Activated CD8-positive, alpha-beta T cell treated with anti-CD3 and anti-CD28 coated beads for 36 hours (primary cell): ENCODE measurements at regions of chr9 and their contacts with region 1.

Region 1: DNA sequence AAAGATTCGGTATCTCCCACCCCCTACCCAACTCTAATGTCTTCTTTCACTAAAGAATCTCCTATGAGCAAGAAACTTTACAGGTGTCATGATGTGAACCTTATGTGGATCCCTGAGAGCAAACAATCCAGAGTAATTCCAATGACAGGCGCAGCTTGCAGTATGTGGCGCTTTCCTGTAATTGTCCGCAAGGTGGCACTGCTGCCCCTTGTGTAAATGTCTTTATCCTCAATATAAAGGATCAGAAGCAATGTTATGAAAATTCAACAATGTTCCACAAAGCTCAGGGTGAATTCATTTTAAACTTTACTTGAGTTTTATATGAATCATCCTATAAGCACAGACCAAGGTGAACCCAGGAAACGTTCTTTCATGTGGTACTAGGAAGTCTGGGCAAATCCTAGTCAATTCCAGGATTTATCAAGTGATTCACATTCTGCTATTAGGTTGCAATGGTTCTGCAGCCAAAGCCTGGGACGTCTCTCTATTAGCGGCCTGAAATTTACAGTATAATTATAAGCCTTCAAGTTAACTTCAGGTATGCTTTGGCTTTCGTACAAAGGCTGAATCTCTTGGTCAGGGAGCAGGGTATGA is 113.7 kb downstream of the TRPM6 start:
- DNase-seq: peak; percentile 86
- ATAC-seq: peak; percentile 77
- H3K4me3 Mint-ChIP-seq: no peak overlapping the region
- H3K27ac Mint-ChIP-seq: no peak overlapping the region
- H3K4me1 Mint-ChIP-seq: peaks cover 11% of the 10 kb centered on the region
- H3K27me3 Mint-ChIP-seq: peaks cover 20% of the 10 kb centered on the region
- CTCF ChIP-seq: peak; percentile 90

Region 2: DNA sequence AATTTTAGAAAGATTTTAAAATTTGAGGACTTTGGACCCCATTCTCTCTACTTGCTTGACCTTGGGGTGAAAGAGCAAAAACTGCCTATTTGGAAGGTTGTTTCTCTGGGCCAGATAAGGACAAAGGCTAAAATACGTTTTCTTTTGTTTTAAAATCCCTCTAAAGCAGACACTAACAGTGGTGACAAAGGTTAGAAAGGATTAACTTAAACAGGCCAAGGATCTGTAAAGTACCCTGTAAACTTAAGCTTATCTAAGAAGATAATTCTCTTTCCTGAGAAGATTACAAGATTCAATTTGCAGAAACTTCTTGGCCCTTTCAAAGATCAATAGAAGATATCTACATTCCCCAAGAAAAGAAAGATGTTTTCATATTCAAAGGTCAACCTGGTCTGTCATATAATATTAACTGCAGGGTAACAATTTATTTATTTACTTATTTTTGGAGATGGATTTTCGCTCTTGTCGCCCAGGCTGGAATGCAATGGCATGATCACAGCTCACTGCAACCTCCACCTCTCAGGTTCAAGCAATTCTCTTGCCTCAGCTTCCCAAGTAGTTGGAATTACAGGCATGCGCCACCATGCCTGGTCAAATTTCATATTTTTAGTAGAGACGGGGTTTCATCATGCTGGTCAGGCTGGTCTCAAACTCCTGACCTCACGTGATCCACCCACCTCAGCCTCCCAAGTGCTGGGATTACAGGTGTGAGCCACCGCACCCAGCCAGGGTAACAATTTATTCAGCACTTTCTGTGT is 101.9 kb after region 1 on chr9:
- CTCF ChIA-PET with region 1: no interaction called
- POLR2A ChIA-PET with region 1: no interaction called
- intact Hi-C with region 1: no loop called
- DNase-seq: no peak
- ATAC-seq: no peak
- H3K4me3 Mint-ChIP-seq: no peak overlapping the region
- H3K27ac Mint-ChIP-seq: no peak overlapping the region
- H3K4me1 Mint-ChIP-seq: no peaks in the 10 kb centered on the region
- H3K27me3 Mint-ChIP-seq: peaks cover 15% of the 10 kb centered on the region
- CTCF ChIP-seq: no peak

Region 3: GRCh38 chr9:74887041-74887980 is 113.3 kb after region 1 on chr9 and contains the start of gene TRPM6:
- CTCF ChIA-PET with region 1: interaction called, 5 read pairs
- POLR2A ChIA-PET with region 1: no interaction called
- intact Hi-C with region 1: loop called (anchors 5 kb)
- DNase-seq: peak; percentile 43
- ATAC-seq: peak; percentile 68
- H3K4me3 Mint-ChIP-seq: peak within 1 kb of the TSS; percentile 74
- H3K27ac Mint-ChIP-seq: no peak within 1 kb of the TSS
- H3K4me1 Mint-ChIP-seq: peaks cover 6% of the 10 kb centered on the region
- H3K27me3 Mint-ChIP-seq: peaks cover 39% of the 10 kb centered on the region
- CTCF ChIP-seq: no peak
- total RNA-seq, gene TRPM6: not detected

Region 4: GRCh38 chr9:75001719-75002422 is 227.9 kb after region 1 on chr9:
- CTCF ChIA-PET with region 1: interaction called, 161 read pairs
- POLR2A ChIA-PET with region 1: no interaction called
- intact Hi-C with region 1: loop called (anchors 2 kb)
- DNase-seq: no peak
- ATAC-seq: peak; percentile 91
- H3K4me3 Mint-ChIP-seq: no peak overlapping the region
- H3K27ac Mint-ChIP-seq: no peak overlapping the region
- H3K4me1 Mint-ChIP-seq: no peaks in the 10 kb centered on the region
- H3K27me3 Mint-ChIP-seq: no peaks in the 10 kb centered on the region
- CTCF ChIP-seq: peak; percentile 87

Region 5: DNA sequence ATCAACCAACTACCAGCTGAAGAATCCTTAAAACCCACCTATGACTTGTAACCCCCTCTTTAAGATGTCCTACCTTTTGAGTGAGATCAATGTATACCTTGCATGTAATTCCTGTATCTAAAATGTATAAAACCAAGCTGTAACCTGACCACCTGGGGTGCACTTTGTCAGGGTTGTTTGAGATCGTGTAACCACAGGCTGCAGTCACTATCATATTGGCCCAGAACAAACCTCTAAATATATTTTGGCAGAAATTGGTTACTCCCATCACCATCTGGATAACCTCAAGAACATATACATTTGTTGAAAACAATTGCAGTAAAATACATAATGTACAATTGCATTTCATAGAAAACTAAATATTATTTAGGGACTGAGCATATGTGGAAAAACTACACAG is 245.7 kb after region 1 on chr9:
- CTCF ChIA-PET with region 1: interaction called, 10 read pairs
- POLR2A ChIA-PET with region 1: no interaction called
- intact Hi-C with region 1: no loop called
- DNase-seq: no peak
- ATAC-seq: no peak
- H3K4me3 Mint-ChIP-seq: no peak overlapping the region
- H3K27ac Mint-ChIP-seq: no peak overlapping the region
- H3K4me1 Mint-ChIP-seq: peaks cover 51% of the 10 kb centered on the region
- H3K27me3 Mint-ChIP-seq: no peaks in the 10 kb centered on the region
- CTCF ChIP-seq: no peak

Region 6: GRCh38 chr9:75071530-75072124 is 297.6 kb after region 1 on chr9:
- CTCF ChIA-PET with region 1: interaction called, 47 read pairs
- POLR2A ChIA-PET with region 1: no interaction called
- intact Hi-C with region 1: loop called (anchors 2 kb)
- DNase-seq: peak; percentile 86
- ATAC-seq: peak; percentile 96
- H3K4me3 Mint-ChIP-seq: no peak overlapping the region
- H3K27ac Mint-ChIP-seq: peak overlapping the region; percentile 74
- H3K4me1 Mint-ChIP-seq: peaks cover 25% of the 10 kb centered on the region
- H3K27me3 Mint-ChIP-seq: no peaks in the 10 kb centered on the region
- CTCF ChIP-seq: no peak

Region 7: GRCh38 chr9:75238311-75238978 is 464.5 kb after region 1 on chr9:
- CTCF ChIA-PET with region 1: interaction called, 7 read pairs
- POLR2A ChIA-PET with region 1: no interaction called
- intact Hi-C with region 1: loop called (anchors 2 kb)
- DNase-seq: peak; percentile 64
- ATAC-seq: peak; percentile 99
- H3K4me3 Mint-ChIP-seq: no peak overlapping the region
- H3K27ac Mint-ChIP-seq: no peak overlapping the region
- H3K4me1 Mint-ChIP-seq: no peaks in the 10 kb centered on the region
- H3K27me3 Mint-ChIP-seq: no peaks in the 10 kb centered on the region
- CTCF ChIP-seq: peak; percentile 59